ENCODE measurements at regions of chr11 and their contacts with region 1.

Region 1: DNA sequence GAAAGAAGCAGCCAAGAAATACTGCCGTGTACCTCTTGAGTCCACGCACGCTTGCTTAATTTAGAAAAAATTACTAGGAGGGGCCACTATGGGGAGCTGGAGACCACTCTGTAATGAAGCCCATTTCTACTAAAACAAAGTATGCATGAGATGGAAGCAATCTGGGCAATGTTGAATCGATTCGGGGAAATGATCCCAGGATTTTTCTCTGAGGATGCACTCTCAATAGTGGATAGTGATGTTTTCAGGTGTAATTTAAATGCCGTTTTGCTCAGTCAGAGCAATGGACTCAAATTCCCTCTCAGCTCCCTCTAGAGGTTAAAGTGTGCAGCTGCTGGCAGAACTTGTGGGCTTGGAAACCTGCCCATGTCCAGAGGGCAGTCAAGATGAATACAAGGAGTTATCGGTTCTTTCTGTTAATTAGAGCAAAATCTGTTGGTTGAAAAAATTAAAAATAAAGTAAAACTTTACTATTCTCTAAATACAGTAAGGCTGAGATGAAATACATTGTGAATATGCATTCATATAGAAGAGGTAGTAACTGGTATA is 64.1 kb downstream of the ME3 start:
- DNase-seq: peak; percentile 58 to 76 (median 75)
- ATAC-seq: peak; percentile 43 to 88 (median 83)
- H3K4me3 ChIP-seq: peak overlapping the region in 3 of 12 donors; percentile 8 to 16 (median 8)
- H3K27ac ChIP-seq: peak overlapping the region in 4 of 12 donors; percentile 1 to 39 (median 8)
- H3K4me1 ChIP-seq: peaks cover 0 to 43% (median 22%) of the 10 kb centered on the region in 12 donors
- H3K27me3 ChIP-seq: no peaks in the 10 kb centered on the region
- CTCF ChIP-seq: peak; percentile 86 to 98 (median 95)
- POLR2A ChIP-seq: no peak

Region 2: GRCh38 chr11:86255896-86256295 is 352.4 kb before region 1 on chr11:
- intact Hi-C with region 1: no loop called
- DNase-seq: no peak
- ATAC-seq: no peak
- H3K4me3 ChIP-seq: no peak overlapping the region
- H3K27ac ChIP-seq: no peak overlapping the region
- H3K4me1 ChIP-seq: peaks cover 0 to 7% (median 0%) of the 10 kb centered on the region in 12 donors
- H3K27me3 ChIP-seq: no peaks in the 10 kb centered on the region
- CTCF ChIP-seq: no peak
- POLR2A ChIP-seq: no peak

Region 3: DNA sequence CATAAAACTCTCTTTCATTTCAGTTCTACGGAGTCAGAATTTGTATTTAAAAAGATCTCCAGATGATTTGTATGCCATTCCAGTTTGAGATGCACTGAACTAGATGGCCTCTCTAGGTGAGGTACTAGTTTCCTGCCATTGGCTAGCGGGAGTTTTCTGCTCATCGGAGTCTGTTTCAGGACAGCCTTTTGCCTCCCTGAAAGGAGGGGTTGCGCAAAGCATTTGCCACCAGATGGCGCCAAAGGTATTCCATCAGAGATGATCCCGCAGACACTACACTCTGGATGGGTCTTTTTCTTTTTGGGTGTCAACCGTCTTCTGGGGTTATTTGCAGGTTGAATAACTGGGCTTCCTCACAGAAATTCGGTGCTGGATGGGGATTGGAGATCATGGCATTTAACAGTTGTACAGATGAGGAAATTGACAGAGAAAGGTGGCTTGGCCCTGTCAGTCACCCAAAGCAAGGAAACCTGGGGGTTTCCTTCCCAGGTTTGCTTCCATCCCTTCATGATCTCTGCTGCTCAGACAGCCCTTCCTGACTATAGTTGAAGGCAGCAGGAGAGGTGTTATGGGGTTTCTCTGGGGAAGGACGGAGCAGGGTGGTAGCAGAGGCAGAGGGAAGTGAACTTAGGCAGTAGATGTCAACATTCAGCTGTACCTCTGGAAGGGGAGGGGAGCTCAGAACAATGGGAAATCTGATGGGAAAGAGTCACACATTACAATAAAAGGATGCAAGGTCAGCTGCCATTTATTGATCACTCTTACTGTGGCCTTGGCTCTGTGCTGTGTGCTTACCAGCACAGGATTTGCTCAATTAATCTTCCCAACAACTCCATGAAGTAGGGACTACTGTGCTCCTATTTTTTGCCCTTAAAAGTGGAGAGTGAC is 152.0 kb before region 1 on chr11:
- intact Hi-C with region 1: loop called (anchors 1 to 10 kb)
- DNase-seq: peak; percentile 82 to 86 (median 85)
- ATAC-seq: peak; percentile 47 to 83 (median 78)
- H3K4me3 ChIP-seq: no peak overlapping the region
- H3K27ac ChIP-seq: peak overlapping the region in 6 of 12 donors; percentile 20 to 61 (median 39)
- H3K4me1 ChIP-seq: peaks cover 3 to 55% (median 37%) of the 10 kb centered on the region in 12 donors
- H3K27me3 ChIP-seq: no peaks in the 10 kb centered on the region
- CTCF ChIP-seq: peak; percentile 83 to 97 (median 91)
- POLR2A ChIP-seq: no peak

Region 4: GRCh38 chr11:86559311-86559945 is 48.9 kb before region 1 on chr11:
- intact Hi-C with region 1: loop called in 2 of 10 experiments (anchors 5 kb)
- DNase-seq: peak in 4 of 5 donors; percentile 48 to 80 (median 55)
- ATAC-seq: peak; percentile 76 to 86 (median 82)
- H3K4me3 ChIP-seq: no peak overlapping the region
- H3K27ac ChIP-seq: peak overlapping the region; percentile 64 to 91 (median 80)
- H3K4me1 ChIP-seq: peaks cover 7 to 37% (median 27%) of the 10 kb centered on the region in 12 donors
- H3K27me3 ChIP-seq: no peaks in the 10 kb centered on the region
- CTCF ChIP-seq: no peak
- POLR2A ChIP-seq: no peak

Region 5: DNA sequence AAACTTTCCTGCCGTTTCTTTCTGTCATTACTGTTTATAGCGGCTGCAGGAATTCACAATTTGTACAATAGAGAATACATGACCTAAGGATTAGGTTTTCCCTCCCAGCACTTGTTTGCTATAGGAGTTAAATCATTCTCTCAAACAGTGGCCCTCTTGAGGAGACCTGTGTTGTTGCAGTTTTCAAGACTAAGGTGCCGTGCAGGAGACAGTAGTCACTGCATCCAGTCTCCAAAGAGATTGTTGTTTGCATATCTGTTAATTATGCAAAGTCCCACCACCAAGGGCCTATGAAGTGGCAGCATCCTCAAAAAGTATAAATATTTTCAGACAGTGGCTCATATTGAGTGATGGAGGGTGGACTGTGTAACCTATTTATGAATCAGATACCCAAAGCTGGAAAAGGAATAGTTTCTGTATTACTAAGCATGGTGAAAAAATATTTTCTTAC is 194.3 kb after region 1 on chr11:
- intact Hi-C with region 1: loop called in 6 of 10 experiments (anchors 1 to 5 kb)
- DNase-seq: no peak
- ATAC-seq: peak in 2 of 4 donors; percentile 20 to 47
- H3K4me3 ChIP-seq: peak overlapping the region in 6 of 12 donors; percentile 15 to 92 (median 75)
- H3K27ac ChIP-seq: peak overlapping the region in 1 of 12 donors; percentile 83
- H3K4me1 ChIP-seq: peaks cover 0 to 39% (median 18%) of the 10 kb centered on the region in 12 donors
- H3K27me3 ChIP-seq: peaks cover 0 to 15% (median 0%) of the 10 kb centered on the region in 9 donors
- CTCF ChIP-seq: peak; percentile 28 to 64 (median 44)
- POLR2A ChIP-seq: no peak

Region 6: DNA sequence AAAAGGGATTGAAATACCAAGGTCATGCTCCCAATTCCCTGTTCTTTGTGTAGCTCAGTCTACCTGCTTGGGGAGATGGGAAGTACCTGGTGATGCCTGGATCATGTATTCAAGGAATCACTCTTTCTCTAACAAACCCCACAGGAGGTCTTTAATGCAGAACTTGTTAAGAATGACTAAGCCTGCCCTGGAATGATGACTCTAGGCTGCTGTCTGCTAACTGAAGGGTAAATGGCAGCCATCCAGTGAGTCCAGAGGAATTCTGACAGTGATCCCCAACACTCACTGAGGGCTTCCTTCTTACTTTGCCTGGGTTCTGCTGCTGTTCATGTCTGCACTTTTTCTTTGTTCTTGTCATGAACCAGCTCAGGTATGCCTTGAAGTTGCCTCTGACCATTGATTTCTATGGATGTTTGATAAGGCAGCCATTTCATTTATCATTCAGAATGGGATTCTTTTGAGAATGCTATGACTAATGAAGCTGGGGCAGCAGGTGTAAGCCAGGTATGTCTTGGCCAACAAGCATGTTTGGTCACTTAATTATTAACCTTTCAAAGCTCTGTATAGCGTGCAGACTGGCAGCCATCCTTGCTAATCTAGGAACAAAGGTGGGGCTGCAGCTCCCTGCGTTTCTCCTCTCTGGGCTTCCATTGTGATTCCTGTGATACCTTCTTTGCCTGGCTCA is 203.5 kb after region 1 on chr11:
- intact Hi-C with region 1: loop called (anchors 2 to 5 kb)
- DNase-seq: no peak
- ATAC-seq: no peak
- H3K4me3 ChIP-seq: no peak overlapping the region
- H3K27ac ChIP-seq: peak overlapping the region in 1 of 12 donors; percentile 80
- H3K4me1 ChIP-seq: peaks cover 0 to 28% (median 11%) of the 10 kb centered on the region in 12 donors
- H3K27me3 ChIP-seq: no peaks in the 10 kb centered on the region
- CTCF ChIP-seq: no peak
- POLR2A ChIP-seq: no peak

Measured in heart left ventricle (tissue), 16 donors.